ENCODE measurements at regions of chr15 and their contacts with region 1.

Region 1: DNA sequence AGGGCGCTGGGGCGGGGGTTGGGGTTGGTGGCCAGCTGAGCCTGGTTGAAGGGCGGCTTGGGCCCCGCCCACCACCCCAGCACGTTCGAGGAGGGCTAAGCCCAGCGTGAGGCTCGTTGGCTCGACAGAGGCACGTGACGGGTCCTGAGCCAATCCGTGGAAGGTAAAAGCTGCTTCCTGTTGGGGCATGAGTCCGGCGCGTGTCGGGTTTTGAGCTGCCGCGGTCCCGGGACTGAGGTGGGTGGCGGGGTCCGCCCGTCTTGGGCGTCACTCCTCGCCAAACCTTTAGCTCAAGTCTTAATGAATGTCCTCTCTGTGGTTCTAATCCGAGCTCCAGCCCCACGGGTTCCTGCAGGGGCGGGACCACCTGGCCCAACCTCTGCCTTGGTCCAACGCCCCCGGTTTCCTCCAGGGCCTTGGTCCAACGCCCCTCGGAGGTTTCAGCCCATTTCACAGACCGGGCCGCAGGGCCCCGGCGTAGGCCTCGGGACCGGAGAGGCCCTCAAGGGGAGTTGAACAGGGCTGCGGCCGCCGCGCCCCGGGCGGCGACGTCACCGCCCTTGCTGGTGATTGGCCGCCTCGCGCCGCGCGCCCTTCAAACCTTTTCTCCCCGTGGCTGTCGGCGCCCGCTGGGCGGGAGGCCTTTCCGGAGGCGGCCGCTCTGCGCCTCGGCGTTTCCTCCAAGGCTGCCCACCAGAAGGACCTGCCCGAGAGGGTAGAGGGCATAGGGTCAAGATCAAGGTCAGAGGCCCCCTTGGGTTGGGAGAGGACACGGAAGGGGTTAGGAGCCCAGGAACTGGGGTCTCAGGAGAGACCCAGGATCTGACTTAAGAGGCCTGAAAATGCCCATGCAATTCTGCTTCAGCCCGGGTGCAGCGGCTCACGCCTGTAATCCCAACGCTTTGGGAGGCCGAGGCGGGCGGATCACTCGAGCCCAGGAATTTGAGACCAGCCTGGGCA is at the start of gene RCCD1:
- DNase-seq: peak; percentile 64
- H3K4me3 ChIP-seq: peak within 1 kb of the TSS; percentile 86
- CTCF ChIP-seq: no peak

Region 2: DNA sequence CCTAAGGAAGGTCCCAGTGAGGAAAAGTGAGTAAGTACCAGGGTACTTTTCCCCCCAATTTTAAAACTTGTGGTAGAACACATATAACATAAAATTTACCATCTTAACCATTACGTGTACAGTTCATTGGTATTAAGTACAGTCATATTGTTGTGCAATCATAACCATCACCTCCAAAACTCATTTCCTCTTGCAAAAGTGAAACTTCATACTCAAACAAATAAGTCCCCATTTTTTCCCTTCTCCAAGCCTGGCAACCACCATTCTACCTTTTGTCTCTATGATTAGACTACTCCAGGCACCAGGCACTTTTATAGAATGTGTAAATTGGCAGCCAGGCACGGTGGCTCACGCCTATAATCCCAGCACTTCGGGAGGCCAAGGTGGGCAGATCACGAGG is 27.1 kb after region 1 on chr15:
- CTCF ChIA-PET with region 1: interaction called, 169 read pairs
- POLR2A ChIA-PET with region 1: no interaction called
- DNase-seq: no peak
- H3K4me3 ChIP-seq: no peak overlapping the region
- CTCF ChIP-seq: no peak

Region 3: GRCh38 chr15:91022075-91022835 is 67.3 kb after region 1 on chr15 and contains the start of gene VPS33B:
- CTCF ChIA-PET with region 1: interaction called, 30 read pairs
- POLR2A ChIA-PET with region 1: no interaction called
- DNase-seq: peak; percentile 36
- H3K4me3 ChIP-seq: peak within 1 kb of the TSS; percentile 99
- CTCF ChIP-seq: no peak

Region 4: DNA sequence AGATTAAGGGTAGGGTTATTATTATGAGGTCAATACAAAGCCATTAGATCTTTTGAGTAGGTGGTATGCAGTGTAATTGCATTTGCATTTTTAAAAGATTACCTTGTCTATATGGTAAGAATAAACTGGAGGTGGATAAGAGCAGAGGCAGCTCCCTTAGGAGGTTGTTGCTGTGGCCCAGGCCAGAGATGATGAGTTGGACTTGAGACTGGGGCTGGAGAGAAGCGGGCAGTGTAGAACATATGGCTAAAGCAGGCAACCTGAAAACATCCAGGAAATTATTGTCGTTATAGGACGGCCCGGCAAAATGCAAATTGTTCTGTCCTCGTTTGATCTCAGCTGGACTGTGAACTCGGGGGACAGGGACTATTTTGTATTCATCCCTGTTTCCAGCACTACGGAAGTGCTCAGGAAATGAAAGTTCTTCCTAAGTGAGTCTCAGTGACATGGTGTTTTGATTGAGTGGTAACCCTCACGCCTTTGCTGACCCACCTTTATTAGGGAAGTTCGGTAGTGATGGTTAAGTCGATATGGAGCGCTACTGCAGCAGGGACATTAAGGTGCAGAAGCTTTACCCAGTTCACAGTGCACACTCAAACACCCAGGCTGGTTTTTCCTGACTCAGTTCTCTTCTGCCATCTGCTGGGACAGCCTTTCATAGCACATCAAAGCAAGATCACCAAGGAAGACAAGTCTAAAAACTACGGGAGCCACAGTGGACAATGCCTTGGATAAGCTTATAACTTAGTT is 94.6 kb after region 1 on chr15:
- CTCF ChIA-PET with region 1: interaction called, 193 read pairs
- POLR2A ChIA-PET with region 1: interaction called, 4 read pairs
- DNase-seq: no peak
- H3K4me3 ChIP-seq: no peak overlapping the region; the same call in 1 of the 2 replicates
- CTCF ChIP-seq: peak; percentile 66

Region 5: GRCh38 chr15:91271565-91272153 is 316.7 kb after region 1 on chr15:
- CTCF ChIA-PET with region 1: interaction called, 95 read pairs
- POLR2A ChIA-PET with region 1: no interaction called
- DNase-seq: peak; percentile 10
- H3K4me3 ChIP-seq: no peak overlapping the region
- CTCF ChIP-seq: peak; percentile 55

Measured in AG04449 (cell line).